ENCODE measurements at regions of chr7 and their contacts with region 1.

Region 1: GRCh38 chr7:100478966-100479665 is at the start of gene TSC22D4:
- DNase-seq: peak; percentile 92
- ATAC-seq: peak; percentile 81
- H3K4me3 ChIP-seq: peak within 1 kb of the TSS; percentile 91
- H3K27ac ChIP-seq: peak within 1 kb of the TSS; percentile 80
- H3K4me1 ChIP-seq: peaks cover 21% of the 10 kb centered on the region
- H3K27me3 ChIP-seq: no peaks in the 10 kb centered on the region
- CTCF ChIP-seq: no peak
- POLR2A ChIP-seq: peak; percentile 65; the same call in 1 of the 2 replicates
- RAD21 ChIP-seq: no peak
- total RNA-seq, gene TSC22D4: 9.3 and 10.0 TPM in 2 replicates

Region 2: DNA sequence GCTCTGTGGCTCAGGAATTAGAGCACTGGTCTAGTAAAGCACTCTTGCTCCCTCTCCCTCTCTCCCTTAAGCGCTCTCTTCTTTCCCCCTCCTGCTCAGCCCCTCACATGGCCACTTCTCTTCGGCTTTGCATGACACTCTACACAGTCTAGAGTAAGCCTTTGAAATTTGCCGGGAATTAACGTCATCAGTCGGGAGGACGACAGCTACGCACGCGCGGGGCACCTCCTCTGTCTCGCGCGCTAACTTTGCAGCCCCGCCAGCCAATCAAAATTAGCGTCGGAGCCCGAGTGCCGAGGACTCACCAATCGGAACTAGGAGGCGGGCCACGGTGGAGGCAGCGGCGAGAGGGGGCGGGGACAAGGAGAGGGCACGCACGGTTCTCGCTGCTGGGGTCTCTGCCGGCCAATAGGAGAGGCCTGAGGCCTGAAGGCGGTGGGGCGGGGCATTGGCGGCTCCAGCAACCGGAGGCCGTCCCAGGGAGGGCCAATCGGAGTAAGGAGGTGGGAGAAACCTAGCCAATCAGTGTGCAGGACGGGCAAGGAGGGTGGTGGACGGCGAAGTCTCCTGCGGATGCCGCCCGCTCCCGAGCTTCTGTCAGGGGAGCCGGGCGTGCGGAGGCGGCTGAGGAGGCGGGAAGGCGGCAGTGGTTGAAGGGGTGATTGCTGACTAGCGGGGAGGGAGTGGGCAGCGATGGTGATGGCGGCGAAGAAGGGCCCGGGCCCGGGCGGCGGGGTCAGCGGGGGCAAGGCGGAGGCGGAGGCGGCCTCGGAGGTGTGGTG is 59.7 kb after region 1 on chr7 and contains the start of gene AGFG2:
- CTCF ChIA-PET with region 1: interaction called, 3 read pairs
- POLR2A ChIA-PET with region 1: no interaction called
- dilution Hi-C with region 1: no loop called
- in situ Hi-C with region 1: loop called (anchors 5 kb)
- intact Hi-C with region 1: no loop called
- DNase-seq: peak; percentile 99
- ATAC-seq: peak; percentile 99
- H3K4me3 ChIP-seq: peak within 1 kb of the TSS; percentile 61
- H3K27ac ChIP-seq: no peak within 1 kb of the TSS; the same call in 1 of the 2 replicates
- H3K4me1 ChIP-seq: peaks cover 3% of the 10 kb centered on the region
- H3K27me3 ChIP-seq: no peaks in the 10 kb centered on the region; the same call in 1 of the 2 replicates
- CTCF ChIP-seq: no peak
- POLR2A ChIP-seq: 0 out of 2 replicates have a peak, but pooled peaks have one; percentile 22
- RAD21 ChIP-seq: 0 out of 2 replicates have a peak, but pooled peaks have one; percentile 12
- total RNA-seq, gene AGFG2: 3.0 and 4.2 TPM in 2 replicates

Region 3: DNA sequence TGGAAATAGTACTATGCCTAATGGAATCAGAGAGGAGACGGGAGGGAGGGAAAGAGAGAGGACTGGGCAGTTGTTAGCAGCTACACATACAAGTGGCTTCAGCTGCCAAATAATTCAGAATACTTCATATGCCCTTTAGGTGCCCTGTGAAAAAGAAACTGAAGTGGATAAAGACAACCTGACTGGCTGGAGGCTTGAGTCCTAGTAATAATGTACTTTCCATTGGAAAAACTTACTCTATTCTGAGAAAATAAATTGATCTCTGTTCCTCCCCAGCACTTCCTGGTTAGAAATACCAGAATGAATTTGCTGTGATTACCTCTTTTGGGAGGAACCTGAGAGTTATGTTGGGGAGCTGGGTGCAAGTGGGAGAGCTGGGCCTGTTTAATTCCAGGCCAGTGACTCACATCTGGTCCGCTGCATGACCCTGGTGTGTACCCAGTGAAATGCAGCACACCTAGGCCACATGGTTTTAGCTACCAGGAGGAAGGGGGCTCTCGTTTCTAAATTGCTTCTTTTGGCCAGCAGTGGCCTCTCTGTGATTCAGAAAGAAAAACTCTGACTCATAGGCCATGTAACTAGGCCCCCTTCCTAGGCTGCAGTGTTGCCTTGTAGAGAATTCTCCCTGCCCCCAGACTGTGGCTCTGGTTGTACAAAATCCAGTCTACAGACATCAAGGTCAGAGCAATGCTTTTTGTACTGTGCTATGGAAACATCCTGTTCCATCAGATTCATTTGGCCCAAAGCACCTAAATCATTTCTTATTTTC is 66.4 kb after region 1 on chr7:
- CTCF ChIA-PET with region 1: interaction called, 3 read pairs
- POLR2A ChIA-PET with region 1: no interaction called
- dilution Hi-C with region 1: no loop called
- in situ Hi-C with region 1: loop called (anchors 5 kb)
- intact Hi-C with region 1: loop called (anchors 5 kb)
- DNase-seq: peak; percentile 86
- ATAC-seq: peak; percentile 93
- H3K4me3 ChIP-seq: no peak overlapping the region
- H3K27ac ChIP-seq: peak overlapping the region; percentile 49
- H3K4me1 ChIP-seq: peaks cover 28% of the 10 kb centered on the region
- H3K27me3 ChIP-seq: no peaks in the 10 kb centered on the region
- CTCF ChIP-seq: peak; percentile 18; the same call in 1 of the 2 replicates
- POLR2A ChIP-seq: no peak
- RAD21 ChIP-seq: no peak; the same call in 1 of the 2 replicates

Region 4: GRCh38 chr7:100604028-100604975 is 125.2 kb after region 1 on chr7:
- CTCF ChIA-PET with region 1: no interaction called
- POLR2A ChIA-PET with region 1: interaction called, 13 read pairs
- dilution Hi-C with region 1: no loop called
- in situ Hi-C with region 1: no loop called
- intact Hi-C with region 1: no loop called
- DNase-seq: peak; percentile 46
- ATAC-seq: peak; percentile 54
- H3K4me3 ChIP-seq: peak overlapping the region; percentile 69
- H3K27ac ChIP-seq: peak overlapping the region; percentile 99
- H3K4me1 ChIP-seq: peaks cover 9% of the 10 kb centered on the region
- H3K27me3 ChIP-seq: no peaks in the 10 kb centered on the region
- CTCF ChIP-seq: peak; percentile 36
- POLR2A ChIP-seq: no peak
- RAD21 ChIP-seq: peak; percentile 18; the same call in 1 of the 2 replicates

Region 5: DNA sequence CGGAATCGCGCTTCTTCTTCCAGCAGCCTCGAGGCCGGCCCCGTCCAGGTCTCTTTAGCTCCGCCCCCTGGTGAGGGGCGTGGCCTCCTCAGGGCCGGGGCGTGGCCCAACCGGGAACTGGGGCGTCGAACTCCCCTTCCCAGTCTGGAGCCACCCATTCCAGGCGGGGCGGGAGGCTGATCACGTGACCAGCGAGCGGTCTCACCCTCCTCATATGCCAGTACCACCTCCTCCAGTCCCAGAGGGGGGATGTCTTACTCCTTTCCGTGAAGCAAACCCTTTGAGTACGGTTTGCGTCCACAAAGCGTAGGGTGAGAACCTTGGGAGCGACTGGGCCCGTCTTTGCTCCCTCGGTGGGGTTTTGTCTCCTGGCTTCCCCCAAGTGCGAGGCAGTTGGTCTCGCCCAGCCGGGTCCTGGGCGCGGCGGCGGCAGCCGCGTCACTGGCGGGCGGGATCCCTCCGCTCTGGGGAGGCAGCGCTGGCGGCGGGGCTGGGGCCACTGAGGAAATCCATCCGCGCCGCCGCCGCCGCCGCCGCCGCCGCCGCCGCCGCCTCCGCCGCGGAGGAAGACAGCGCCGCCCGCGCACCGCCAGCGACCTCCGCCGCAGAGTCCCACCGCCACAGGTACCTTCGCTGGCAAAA is 194.3 kb after region 1 on chr7 and contains the start of gene GNB2:
- CTCF ChIA-PET with region 1: no interaction called
- POLR2A ChIA-PET with region 1: no interaction called
- dilution Hi-C with region 1: no loop called
- in situ Hi-C with region 1: loop called (anchors 10 kb)
- intact Hi-C with region 1: no loop called
- DNase-seq: peak; percentile 99
- ATAC-seq: peak; percentile 86
- H3K4me3 ChIP-seq: peak within 1 kb of the TSS; percentile 85
- H3K27ac ChIP-seq: peak within 1 kb of the TSS; percentile 97
- H3K4me1 ChIP-seq: peaks cover 4% of the 10 kb centered on the region; the same call in 1 of the 2 replicates
- H3K27me3 ChIP-seq: no peaks in the 10 kb centered on the region
- CTCF ChIP-seq: no peak
- POLR2A ChIP-seq: peak; percentile 25; the same call in 1 of the 2 replicates
- RAD21 ChIP-seq: no peak
- total RNA-seq, gene GNB2: 62.0 and 67.5 TPM in 2 replicates

Region 6: GRCh38 chr7:100914879-100915447 is 435.8 kb after region 1 on chr7:
- CTCF ChIA-PET with region 1: no interaction called
- POLR2A ChIA-PET with region 1: no interaction called
- dilution Hi-C with region 1: no loop called
- in situ Hi-C with region 1: no loop called
- intact Hi-C with region 1: no loop called
- DNase-seq: no peak
- ATAC-seq: no peak
- H3K4me3 ChIP-seq: no peak overlapping the region
- H3K27ac ChIP-seq: no peak overlapping the region
- H3K4me1 ChIP-seq: no peaks in the 10 kb centered on the region
- H3K27me3 ChIP-seq: peaks cover 3% of the 10 kb centered on the region; the same call in 1 of the 2 replicates
- CTCF ChIP-seq: no peak
- POLR2A ChIP-seq: no peak
- RAD21 ChIP-seq: no peak